Psoas muscle (tissue), 8 donors: ENCODE measurements at regions of chr20 and their contacts with region 1.

Region 1: DNA sequence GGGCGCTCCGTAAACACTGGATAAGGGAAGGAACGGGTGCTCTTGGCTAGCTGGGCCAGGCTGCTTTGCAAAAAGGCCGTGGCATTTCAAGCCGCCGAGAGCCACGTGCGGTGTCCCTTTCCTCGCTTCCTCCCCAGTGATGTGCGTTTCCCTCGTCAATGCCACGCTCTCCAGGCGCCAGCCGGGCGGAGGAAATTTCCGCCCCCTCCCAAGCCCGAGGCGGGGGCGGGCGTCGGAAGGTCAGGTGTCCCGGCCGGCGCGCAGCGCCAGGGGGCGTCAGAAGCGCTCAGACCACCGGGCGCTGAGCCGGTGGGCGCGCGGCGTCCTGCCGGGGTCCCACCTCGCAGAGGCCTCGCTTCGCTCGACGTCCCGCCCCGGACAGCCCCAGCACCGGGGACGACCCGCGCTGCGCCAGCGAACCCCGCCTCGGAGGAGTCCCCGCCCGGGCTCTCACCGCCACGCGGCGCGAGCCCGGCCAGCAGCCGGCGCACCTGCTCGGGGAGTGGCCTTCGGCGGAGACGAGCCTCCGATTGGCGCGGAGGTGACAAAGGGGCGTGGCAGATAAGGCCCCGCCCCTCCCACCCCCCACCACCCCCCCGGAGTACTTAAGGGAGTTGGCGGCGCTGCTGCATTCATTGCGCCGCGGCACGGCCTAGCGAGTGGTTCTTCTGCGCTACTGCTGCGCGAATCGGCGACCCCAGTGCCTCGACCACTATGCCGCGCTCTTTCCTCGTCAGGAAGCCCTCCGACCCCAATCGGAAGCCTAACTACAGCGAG is at the start of gene SNAI1:
- DNase-seq: peak; percentile 79 to 91
- ATAC-seq: peak; percentile 91 to 92 (median 92)
- H3K4me3 ChIP-seq: peak within 1 kb of the TSS; percentile 76
- H3K27ac ChIP-seq: peak within 1 kb of the TSS; percentile 84
- H3K4me1 ChIP-seq: peaks cover 40% of the 10 kb centered on the region
- H3K27me3 ChIP-seq: no peaks in the 10 kb centered on the region
- CTCF ChIP-seq: peak; percentile 66
- total RNA-seq, gene SNAI1: 0.75 to 3.0 (median 1.9) TPM

Region 2: GRCh38 chr20:50020288-50020687 is 37.8 kb after region 1 on chr20:
- intact Hi-C with region 1: no loop called
- DNase-seq: no peak
- ATAC-seq: peak in 2 of 4 donors; percentile 19 to 36
- H3K4me3 ChIP-seq: no peak overlapping the region
- H3K27ac ChIP-seq: no peak overlapping the region
- H3K4me1 ChIP-seq: peaks cover 8% of the 10 kb centered on the region
- H3K27me3 ChIP-seq: no peaks in the 10 kb centered on the region
- CTCF ChIP-seq: no peak

Region 3: GRCh38 chr20:50070991-50071888 is 88.7 kb after region 1 on chr20:
- intact Hi-C with region 1: loop called (anchors 1 to 2 kb)
- DNase-seq: peak; percentile 89 to 93
- ATAC-seq: peak; percentile 93 to 98 (median 96)
- H3K4me3 ChIP-seq: peak overlapping the region; percentile 64
- H3K27ac ChIP-seq: no peak overlapping the region
- H3K4me1 ChIP-seq: peaks cover 10% of the 10 kb centered on the region
- H3K27me3 ChIP-seq: no peaks in the 10 kb centered on the region
- CTCF ChIP-seq: peak; percentile 100

Region 4: GRCh38 chr20:50085452-50086365 is 103.2 kb after region 1 on chr20:
- intact Hi-C with region 1: loop called in 1 of 2 experiments (anchors 5 kb)
- DNase-seq: no peak
- ATAC-seq: peak; percentile 69 to 82 (median 72)
- H3K4me3 ChIP-seq: peak overlapping the region; percentile 47
- H3K27ac ChIP-seq: peak overlapping the region; percentile 62
- H3K4me1 ChIP-seq: peaks cover 22% of the 10 kb centered on the region
- H3K27me3 ChIP-seq: no peaks in the 10 kb centered on the region
- CTCF ChIP-seq: peak; percentile 74

Region 5: DNA sequence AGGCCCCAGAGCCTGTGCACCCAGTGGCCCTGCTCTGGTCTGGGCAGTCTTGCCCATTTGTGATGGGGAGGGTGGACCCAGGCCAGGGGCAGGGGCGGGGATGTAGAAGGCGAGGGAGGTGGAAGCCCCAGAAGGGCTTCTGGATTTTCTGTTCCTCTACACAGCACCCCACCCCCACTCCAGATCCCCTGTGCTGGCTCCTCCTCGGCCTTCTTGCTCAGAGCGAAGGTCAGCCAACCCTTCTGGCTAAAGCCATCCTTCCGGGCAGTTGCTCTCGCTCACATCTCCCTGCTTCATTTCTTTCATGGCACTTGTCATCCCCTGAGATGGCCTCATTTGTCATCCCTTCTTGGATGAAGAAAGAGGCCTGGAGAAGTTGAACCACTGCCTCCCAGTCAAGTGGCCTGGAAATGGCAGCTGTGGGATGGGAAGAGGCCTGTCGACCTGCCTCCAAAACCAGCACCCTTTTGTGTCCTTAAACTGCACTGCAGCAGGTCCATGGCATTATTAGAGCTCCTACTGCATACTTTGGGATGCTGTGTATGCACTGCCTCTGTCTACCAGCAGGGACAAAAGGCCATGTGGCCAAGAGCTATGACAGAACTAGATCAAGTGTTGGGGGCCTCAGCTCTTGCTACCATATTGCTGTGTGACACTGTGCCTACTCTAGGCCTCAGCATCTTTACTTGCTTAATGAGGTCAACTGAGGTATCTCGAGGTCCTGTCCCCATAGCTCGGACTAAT is 151.1 kb after region 1 on chr20:
- intact Hi-C with region 1: no loop called
- DNase-seq: peak; percentile 76 to 87
- ATAC-seq: peak; percentile 76 to 85 (median 81)
- H3K4me3 ChIP-seq: no peak overlapping the region
- H3K27ac ChIP-seq: peak overlapping the region; percentile 89
- H3K4me1 ChIP-seq: peaks cover 80% of the 10 kb centered on the region
- H3K27me3 ChIP-seq: no peaks in the 10 kb centered on the region
- CTCF ChIP-seq: peak; percentile 23

Region 6: DNA sequence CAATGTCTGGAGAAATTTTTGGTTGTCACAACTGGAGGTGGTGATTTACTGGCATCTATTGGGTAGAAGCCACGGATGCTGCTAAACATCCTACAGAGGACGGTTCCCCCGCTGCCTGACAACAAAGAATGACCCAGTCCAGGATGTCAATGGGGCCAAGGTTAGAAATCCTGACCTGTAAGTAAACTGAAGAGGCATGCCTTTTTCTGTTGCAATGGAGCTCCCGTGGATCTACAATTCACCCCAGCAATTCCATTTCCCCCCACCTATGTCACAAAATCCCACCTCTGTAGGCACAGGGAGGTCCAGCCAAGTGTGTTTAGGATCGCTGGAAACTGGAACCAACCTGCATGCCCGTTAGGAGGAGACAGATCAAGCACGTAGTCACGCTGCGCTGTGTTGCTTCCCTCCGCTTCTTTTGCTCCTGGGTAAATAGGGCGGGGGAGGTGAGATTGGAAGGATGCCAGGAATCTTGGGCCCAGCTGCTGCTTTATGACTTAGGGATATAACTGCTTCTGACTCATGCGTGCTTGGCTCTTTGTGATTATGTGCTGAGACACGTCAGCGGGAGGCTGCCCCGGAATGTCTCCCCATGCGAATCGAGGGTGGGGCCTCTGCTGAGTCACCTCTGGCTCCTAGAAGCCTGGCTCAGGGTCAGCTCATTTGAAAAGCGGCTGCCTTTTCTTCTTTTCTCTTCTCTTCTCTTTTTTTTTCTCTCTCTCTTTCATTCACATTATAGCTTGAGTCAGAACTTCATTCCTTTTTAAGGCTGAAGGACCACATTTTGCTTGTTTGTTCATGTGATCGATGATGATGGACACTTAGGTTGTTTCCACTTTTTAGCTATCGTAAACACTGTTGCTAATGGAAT is 183.4 kb after region 1 on chr20:
- intact Hi-C with region 1: loop called in 1 of 2 experiments (anchors 5 kb)
- DNase-seq: peak; percentile 97 to 98
- ATAC-seq: peak; percentile 94 to 95 (median 95)
- H3K4me3 ChIP-seq: peak overlapping the region; percentile 54
- H3K27ac ChIP-seq: peak overlapping the region; percentile 92
- H3K4me1 ChIP-seq: peaks cover 39% of the 10 kb centered on the region
- H3K27me3 ChIP-seq: no peaks in the 10 kb centered on the region
- CTCF ChIP-seq: no peak

Region 7: DNA sequence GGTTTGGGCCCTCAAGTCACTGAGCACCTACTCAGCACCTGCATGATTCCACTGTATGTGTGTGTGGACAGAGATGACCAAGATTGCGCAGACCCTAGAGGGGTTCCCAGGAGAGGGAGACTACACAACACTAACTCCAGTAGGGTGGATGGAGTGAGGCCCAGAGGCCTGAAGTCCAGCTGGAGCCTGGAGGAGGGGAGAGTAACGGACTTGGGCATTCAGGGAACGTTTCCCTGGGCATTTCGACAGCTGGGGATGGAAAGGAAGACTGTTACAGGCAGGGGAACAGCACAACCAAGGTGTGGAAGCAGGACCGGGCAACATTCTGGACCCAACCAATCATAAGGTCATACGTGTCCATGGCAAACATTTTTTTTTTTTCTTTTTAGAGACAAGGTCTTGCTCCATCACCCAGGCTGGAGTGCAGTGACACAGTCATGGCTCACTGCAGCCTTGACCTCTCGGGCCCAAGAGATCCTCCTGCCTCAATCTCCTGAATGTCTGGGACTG is 197.0 kb after region 1 on chr20:
- intact Hi-C with region 1: loop called (anchors 5 kb)
- DNase-seq: peak in 1 of 2 donors; percentile 20
- ATAC-seq: peak; percentile 22 to 50 (median 46)
- H3K4me3 ChIP-seq: no peak overlapping the region
- H3K27ac ChIP-seq: no peak overlapping the region
- H3K4me1 ChIP-seq: peaks cover 1% of the 10 kb centered on the region
- H3K27me3 ChIP-seq: no peaks in the 10 kb centered on the region
- CTCF ChIP-seq: no peak